ENCODE measurements at regions of chr1 and their contacts with region 1.

Region 1: GRCh38 chr1:40668769-40669525 is 3.5 kb upstream of the RIMS3 start:
- DNase-seq: peak; percentile 86
- H3K4me3 ChIP-seq: peak overlapping the region in 2 of 4 donors; percentile 21 to 27
- H3K27ac ChIP-seq: no peak overlapping the region
- H3K4me1 ChIP-seq: peaks cover 0 to 26% (median 23%) of the 10 kb centered on the region in 4 donors
- H3K27me3 ChIP-seq: no peaks in the 10 kb centered on the region
- CTCF ChIP-seq: peak; percentile 62 to 97 (median 82)
- EP300 ChIP-seq: no peak
- POLR2A ChIP-seq: no peak

Region 2: GRCh38 chr1:40435471-40435870 is 233.5 kb before region 1 on chr1:
- intact Hi-C with region 1: no loop called
- DNase-seq: no peak
- H3K4me3 ChIP-seq: no peak overlapping the region
- H3K27ac ChIP-seq: no peak overlapping the region
- H3K4me1 ChIP-seq: no peaks in the 10 kb centered on the region
- H3K27me3 ChIP-seq: no peaks in the 10 kb centered on the region
- CTCF ChIP-seq: no peak
- EP300 ChIP-seq: no peak
- POLR2A ChIP-seq: no peak

Region 3: DNA sequence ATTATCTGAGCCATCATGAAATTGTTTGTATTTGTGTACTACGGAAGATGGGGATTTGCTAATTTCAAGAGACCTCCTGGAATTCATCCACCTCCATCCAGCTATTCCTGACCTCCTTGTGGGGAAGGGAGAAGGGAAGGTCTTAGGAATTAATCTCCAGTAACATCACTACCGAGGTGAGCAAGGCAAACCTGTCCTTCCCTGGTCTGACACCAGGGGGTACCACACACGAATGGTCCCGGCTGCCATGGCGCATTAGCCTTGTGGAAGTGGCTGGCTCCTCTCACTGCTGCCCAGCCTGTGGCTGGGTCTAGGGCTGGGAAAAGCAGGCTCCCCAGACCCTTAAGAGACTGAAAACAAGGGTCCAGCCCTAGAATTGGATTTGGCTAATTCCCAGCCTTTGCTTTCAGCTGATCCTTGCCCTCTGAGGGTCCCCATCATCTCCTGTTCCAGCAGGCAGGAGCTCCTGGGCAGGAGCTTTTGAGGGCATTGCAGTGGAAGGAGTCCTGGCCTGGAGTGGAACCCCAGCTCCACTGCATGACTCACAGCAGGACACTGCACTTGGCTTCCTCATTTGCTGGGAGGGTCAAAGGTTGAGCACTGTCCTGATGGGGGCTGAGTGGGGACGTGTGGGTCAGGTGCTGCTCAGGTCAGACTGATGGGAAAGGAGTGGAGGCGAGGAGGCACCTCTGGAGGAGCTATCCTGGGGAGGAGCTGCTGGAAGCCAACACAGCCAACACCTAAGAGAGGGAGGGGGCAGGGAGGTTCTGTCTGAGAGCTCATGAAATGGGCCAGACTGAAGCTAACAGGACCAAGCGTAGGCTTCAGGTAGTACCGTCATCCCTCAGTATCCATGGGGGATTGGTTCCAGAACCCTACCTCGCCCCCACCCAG is 38.2 kb before region 1 on chr1:
- intact Hi-C with region 1: loop called (anchors 5 kb)
- DNase-seq: no peak
- H3K4me3 ChIP-seq: no peak overlapping the region
- H3K27ac ChIP-seq: no peak overlapping the region
- H3K4me1 ChIP-seq: peaks cover 0 to 16% (median 11%) of the 10 kb centered on the region in 4 donors
- H3K27me3 ChIP-seq: no peaks in the 10 kb centered on the region
- CTCF ChIP-seq: peak in 2 of 4 experiments; percentile 13 to 19
- EP300 ChIP-seq: no peak
- POLR2A ChIP-seq: no peak

Region 4: GRCh38 chr1:40755067-40755466 is 86.1 kb after region 1 on chr1:
- intact Hi-C with region 1: no loop called
- DNase-seq: no peak
- H3K4me3 ChIP-seq: no peak overlapping the region
- H3K27ac ChIP-seq: peak overlapping the region; percentile 23 to 80 (median 73)
- H3K4me1 ChIP-seq: peaks cover 0 to 57% (median 42%) of the 10 kb centered on the region in 4 donors
- H3K27me3 ChIP-seq: no peaks in the 10 kb centered on the region
- CTCF ChIP-seq: no peak
- EP300 ChIP-seq: no peak
- POLR2A ChIP-seq: no peak

Region 5: DNA sequence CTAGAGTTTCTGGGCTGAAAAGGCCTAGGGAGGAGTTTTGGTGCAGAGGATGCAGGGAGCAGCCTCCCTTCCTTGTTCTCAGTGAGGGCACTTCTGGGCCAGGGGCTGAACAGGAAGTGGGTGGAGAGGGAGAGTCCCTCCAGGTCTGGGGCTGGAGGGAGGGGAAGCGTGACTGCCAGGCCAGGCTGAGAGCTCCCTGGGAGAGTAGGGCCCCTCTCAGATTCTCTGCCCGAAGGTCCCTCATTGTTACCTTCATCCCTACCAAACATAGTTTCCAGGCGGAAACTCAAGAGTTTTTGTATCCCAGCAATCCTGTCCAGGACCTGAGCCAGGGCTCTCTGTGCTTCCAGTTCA is 156.5 kb after region 1 on chr1:
- intact Hi-C with region 1: no loop called
- DNase-seq: no peak
- H3K4me3 ChIP-seq: no peak overlapping the region
- H3K27ac ChIP-seq: peak overlapping the region in 2 of 4 donors; percentile 65 to 75
- H3K4me1 ChIP-seq: peaks cover 0 to 35% (median 21%) of the 10 kb centered on the region in 4 donors
- H3K27me3 ChIP-seq: no peaks in the 10 kb centered on the region
- CTCF ChIP-seq: no peak
- EP300 ChIP-seq: no peak
- POLR2A ChIP-seq: no peak